Common myeloid progenitor, CD34-positive (primary cell): ENCODE measurements at regions of chr17 and their contacts with region 1.

Region 1: DNA sequence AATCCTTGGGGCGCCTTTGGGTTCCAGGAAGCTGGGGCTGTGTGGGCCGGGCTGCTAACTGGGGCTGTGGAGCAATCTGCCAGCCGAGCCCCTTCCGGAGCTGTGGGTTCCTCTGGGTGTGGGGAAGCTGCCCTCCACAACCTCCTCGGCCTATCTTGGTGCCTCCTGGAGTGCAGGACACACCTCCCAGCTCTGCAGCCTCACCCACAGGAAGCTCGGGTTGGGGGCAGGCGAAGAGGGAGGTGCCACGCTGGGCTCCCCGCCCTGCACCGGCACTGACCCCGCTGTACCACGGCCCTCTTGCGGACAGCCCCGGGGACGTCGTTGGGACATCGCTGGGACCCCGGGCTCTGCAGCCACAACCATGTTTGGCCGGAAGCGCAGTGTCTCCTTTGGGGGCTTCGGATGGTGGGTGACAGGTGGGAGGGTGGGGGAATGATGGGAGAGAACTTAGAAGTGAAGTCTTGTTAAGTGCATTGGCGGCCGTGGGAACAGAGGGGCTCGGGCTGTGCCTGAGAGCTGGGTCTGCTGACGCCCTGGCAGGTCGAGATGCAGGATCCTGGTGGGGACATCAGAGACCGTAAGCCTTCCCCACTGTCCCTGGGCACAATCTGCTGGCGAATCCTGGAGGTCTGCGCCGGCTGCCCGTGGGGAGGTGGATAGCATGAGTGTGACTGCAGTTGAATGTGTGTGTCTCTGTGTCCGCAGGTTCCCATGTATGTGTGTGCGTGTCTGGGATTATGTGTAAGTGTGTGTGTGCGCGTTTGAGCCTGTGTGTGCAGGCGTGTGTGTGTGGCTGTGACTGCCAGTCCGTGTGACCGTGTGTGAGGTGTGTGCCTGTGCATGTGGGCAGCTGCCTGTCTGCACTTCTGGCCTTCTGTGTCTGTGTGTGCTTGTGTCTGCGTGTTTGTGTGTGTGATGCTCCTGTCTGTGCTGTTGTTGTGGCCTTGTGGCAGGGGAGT is at the start of gene RAP1GAP2:
- DNase-seq: peak; percentile 90 to 96 (median 95)
- H3K4me3 ChIP-seq: peak within 1 kb of the TSS; percentile 21 to 91 (median 70)
- H3K27ac ChIP-seq: peak within 1 kb of the TSS in 1 of 2 experiments; percentile 23
- H3K4me1 ChIP-seq: peaks cover 0 to 77% (median 69%) of the 10 kb centered on the region in 4 experiments
- H3K27me3 ChIP-seq: peaks cover 0 to 2% (median 0%) of the 10 kb centered on the region in 5 experiments

Region 2: GRCh38 chr17:2700516-2701141 is 95.8 kb before region 1 on chr17:
- CTCF ChIA-PET with region 1: no interaction called
- POLR2A ChIA-PET with region 1: no interaction called
- DNase-seq: no peak
- H3K4me3 ChIP-seq: no peak overlapping the region
- H3K27ac ChIP-seq: no peak overlapping the region
- H3K4me1 ChIP-seq: no peaks in the 10 kb centered on the region
- H3K27me3 ChIP-seq: no peaks in the 10 kb centered on the region

Region 3: DNA sequence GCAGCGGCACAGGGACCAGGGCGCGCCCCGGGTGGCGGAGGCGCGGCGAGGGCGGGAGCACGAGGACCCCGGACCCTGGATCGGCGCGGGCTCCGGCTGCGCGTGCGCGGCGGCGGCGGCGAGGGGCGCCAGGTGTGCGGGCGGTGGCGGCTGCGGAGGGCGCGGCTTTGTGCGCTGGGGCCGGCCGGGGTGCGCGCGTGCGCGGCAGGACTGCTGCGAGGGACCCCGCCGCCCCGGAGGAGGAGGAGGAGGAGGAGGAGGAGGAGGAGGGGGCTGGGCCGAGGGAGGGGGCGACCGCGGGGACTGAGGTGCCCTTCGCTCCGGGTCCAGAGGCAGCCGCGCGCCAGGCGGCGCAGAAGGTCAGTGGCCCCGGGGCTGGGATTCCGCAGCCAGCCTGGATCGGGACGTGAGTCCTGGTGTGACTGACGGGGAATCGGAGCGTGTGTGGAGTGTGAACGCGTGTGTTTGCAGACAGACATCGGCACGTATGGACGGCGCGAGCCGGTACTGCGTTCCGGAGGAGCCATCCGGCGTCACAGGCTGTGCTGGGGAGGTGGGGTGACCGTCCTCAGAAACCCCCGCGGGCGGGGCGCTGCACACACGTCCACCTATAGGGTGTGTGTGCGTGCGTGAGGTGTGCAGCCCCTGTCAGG is 19.7 kb before region 1 on chr17:
- CTCF ChIA-PET with region 1: interaction called, 10 read pairs
- POLR2A ChIA-PET with region 1: no interaction called
- DNase-seq: peak in 2 of 3 donors; percentile 35 to 54
- H3K4me3 ChIP-seq: peak overlapping the region; percentile 10 to 77 (median 42)
- H3K27ac ChIP-seq: no peak overlapping the region
- H3K4me1 ChIP-seq: peaks cover 0 to 12% (median 11%) of the 10 kb centered on the region in 4 experiments
- H3K27me3 ChIP-seq: peaks cover 3 to 55% (median 16%) of the 10 kb centered on the region in 5 experiments

Region 4: DNA sequence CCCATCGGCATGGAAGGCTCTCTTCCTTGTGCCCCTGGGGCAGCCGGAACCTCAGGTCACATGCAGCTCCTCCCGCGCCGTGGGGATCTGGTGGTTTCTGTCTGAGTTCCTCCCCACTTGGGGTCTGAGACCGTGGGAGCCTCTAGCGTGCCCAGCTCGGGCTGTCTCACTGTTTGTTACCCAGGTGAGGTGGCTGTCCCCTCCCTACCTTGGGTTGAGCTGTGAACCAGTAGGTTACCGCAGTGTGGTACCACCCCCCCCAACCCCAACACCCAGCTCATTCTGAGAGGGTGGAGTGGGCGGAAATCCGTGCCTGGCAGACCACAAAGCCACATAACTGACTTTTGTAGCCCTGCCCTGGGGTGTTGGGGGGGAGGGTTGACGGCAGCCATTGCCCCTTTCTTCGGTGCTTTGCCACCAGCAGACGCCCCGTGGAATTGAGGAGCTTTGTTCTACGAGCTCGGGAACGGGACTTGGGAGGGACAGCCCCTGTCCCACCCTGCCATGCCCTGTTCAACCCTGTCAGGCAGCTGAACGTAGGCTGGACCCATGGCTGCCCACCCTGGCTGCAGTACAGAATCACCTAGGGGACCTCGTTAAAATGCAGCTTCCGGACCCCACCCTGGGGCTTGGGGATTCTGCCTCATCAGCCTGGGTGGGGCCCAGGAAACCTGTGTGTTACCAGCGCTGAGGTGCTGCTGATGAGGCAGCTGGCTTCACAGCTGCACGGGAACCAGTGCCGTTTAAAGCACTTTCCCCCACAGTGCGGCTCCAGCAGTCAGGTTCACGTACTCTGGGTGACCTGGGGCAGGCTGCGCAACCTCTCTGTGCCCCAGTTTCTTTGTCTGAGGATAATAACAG is 18.3 kb after region 1 on chr17:
- CTCF ChIA-PET with region 1: interaction called, 25 read pairs
- POLR2A ChIA-PET with region 1: interaction called, 23 read pairs
- DNase-seq: peak; percentile 92 to 97 (median 97)
- H3K4me3 ChIP-seq: peak overlapping the region in 6 of 7 experiments; percentile 47 to 77 (median 60)
- H3K27ac ChIP-seq: no peak overlapping the region
- H3K4me1 ChIP-seq: peaks cover 0 to 40% (median 28%) of the 10 kb centered on the region in 4 experiments
- H3K27me3 ChIP-seq: no peaks in the 10 kb centered on the region

Region 5: DNA sequence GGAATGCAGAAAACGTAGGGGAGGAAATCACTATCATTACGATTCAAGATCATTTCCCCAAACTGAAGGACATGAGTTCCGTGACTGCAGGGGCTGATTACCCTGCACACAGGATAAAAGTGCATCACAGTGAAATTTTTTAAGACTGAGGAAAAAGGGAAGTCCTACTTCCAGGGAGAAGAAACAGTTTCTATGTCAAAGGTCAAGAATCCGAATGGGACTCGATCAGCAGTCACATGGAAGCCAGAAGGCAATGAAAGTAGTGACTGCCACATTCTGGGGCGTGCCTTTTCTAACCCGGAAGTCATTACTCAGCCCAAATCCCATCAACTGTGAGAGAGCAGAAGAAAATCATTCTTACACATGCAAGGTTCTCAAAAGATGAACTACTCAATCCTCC is 1334.3 kb after region 1 on chr17:
- CTCF ChIA-PET with region 1: no interaction called
- POLR2A ChIA-PET with region 1: no interaction called
- DNase-seq: peak in 1 of 3 donors; percentile 41
- H3K4me3 ChIP-seq: no peak overlapping the region
- H3K27ac ChIP-seq: no peak overlapping the region
- H3K4me1 ChIP-seq: peaks cover 0 to 4% (median 0%) of the 10 kb centered on the region in 4 experiments
- H3K27me3 ChIP-seq: no peaks in the 10 kb centered on the region